Gastrocnemius medialis (tissue), 4 donors: ENCODE measurements at regions of chr16 and their contacts with region 1.

Region 1: GRCh38 chr16:67521095-67521804 is 7.4 kb upstream of the RIPOR1 start:
- DNase-seq: peak; percentile 90 to 94
- ATAC-seq: peak; percentile 95
- H3K4me3 ChIP-seq: peak overlapping the region; percentile 42 to 62 (median 56)
- H3K27ac ChIP-seq: peak overlapping the region; percentile 87 to 93 (median 88)
- H3K4me1 ChIP-seq: peaks cover 3 to 4% of the 10 kb centered on the region in 2 donors
- H3K27me3 ChIP-seq: no peaks in the 10 kb centered on the region
- CTCF ChIP-seq: peak; percentile 78 to 93 (median 89)
- POLR2A ChIP-seq: peak in 1 of 2 donors; percentile 14

Region 2: GRCh38 chr16:67372664-67373063 is 148.6 kb before region 1 on chr16:
- in situ Hi-C with region 1: no loop called
- intact Hi-C with region 1: no loop called
- DNase-seq: no peak
- ATAC-seq: no peak
- H3K4me3 ChIP-seq: no peak overlapping the region
- H3K27ac ChIP-seq: no peak overlapping the region
- H3K4me1 ChIP-seq: peaks cover 0 to 3% of the 10 kb centered on the region in 2 donors
- H3K27me3 ChIP-seq: no peaks in the 10 kb centered on the region
- CTCF ChIP-seq: peak in 4 of 5 experiments; percentile 22 to 53 (median 34)
- POLR2A ChIP-seq: no peak

Region 3: GRCh38 chr16:67406111-67406890 is 114.9 kb before region 1 on chr16:
- in situ Hi-C with region 1: no loop called
- intact Hi-C with region 1: no loop called
- DNase-seq: peak in 1 of 2 donors; percentile 63
- ATAC-seq: peak; percentile 92 to 97
- H3K4me3 ChIP-seq: no peak overlapping the region
- H3K27ac ChIP-seq: peak overlapping the region; percentile 71 to 85 (median 82)
- H3K4me1 ChIP-seq: peaks cover 33 to 48% of the 10 kb centered on the region in 2 donors
- H3K27me3 ChIP-seq: no peaks in the 10 kb centered on the region
- CTCF ChIP-seq: no peak
- POLR2A ChIP-seq: no peak

Region 4: DNA sequence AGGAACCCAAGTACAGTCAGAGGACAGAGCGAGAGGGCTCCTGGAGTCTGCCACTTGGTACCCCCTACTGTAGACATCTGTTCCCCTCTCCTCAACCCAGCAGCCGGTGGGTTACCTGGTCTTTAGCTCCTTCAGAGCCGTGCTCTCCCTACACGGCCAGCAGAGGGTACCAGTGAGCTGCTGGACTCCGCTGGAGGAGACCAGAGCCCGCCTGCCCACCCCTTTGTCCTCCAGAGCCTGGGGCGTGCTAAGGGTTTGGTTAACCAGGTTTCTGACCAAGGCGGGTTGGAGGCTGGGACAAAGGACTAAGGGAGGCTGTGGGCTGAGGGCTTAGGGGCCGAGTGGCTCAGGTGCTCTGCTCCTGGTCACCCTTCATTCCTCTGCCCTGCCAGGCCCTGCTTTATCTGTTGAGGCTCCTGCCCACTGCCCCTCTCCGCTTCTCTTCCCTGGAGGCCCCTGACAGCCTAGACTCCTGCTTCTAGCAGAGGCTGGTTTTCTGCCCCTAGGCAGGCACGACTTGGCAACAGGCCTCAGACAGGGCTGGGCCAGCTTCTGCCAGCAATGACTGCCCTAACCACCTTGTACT is 93.0 kb before region 1 on chr16:
- in situ Hi-C with region 1: no loop called
- intact Hi-C with region 1: loop called (anchors 5 kb)
- DNase-seq: peak in 1 of 2 donors; percentile 64
- ATAC-seq: peak; percentile 61 to 66
- H3K4me3 ChIP-seq: no peak overlapping the region
- H3K27ac ChIP-seq: no peak overlapping the region
- H3K4me1 ChIP-seq: peaks cover 11 to 16% of the 10 kb centered on the region in 2 donors
- H3K27me3 ChIP-seq: peaks cover 0 to 6% (median 0%) of the 10 kb centered on the region in 3 donors
- CTCF ChIP-seq: peak; percentile 85 to 90 (median 87)
- POLR2A ChIP-seq: no peak

Region 5: DNA sequence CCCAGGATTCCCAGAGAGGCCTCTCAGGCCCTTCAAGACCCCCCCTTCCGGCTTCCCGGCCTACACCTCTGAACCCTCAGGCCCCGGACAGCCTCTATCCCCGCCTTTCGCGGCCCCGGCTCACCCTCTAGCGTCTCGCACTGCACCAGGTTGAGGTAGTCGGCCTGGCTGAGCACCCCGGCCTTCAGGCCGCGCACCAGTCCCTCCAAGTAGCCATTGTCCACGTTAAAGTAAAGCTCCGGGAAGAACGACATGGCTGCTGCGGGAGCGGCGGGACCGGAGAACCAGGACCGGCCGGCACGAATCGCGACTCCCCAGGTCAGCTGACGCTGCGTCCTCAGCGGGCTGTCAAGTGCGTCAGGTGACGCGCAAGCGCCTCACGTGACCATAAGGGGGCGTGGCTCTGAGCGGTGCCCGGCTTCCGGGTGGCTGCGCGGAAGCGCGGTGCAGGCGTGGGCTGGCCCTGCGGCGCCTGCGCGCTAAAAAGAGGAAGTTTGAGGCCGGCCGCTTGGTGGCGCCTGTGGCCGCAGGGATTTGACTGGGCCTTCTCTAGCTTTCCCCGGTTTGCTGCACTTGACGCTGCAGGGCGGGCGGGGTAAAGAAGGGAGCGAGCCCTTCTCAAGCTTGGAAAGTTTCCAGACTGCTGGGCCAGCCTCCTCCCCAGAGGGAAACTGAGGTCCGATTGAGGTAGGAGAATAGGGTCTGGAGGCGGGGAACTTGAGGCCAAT is 40.3 kb before region 1 on chr16 and contains the start of gene ATP6V0D1:
- in situ Hi-C with region 1: loop called in 1 of 4 experiments (anchors 5 kb)
- intact Hi-C with region 1: loop called (anchors 5 kb)
- DNase-seq: peak; percentile 95 to 98
- ATAC-seq: peak; percentile 97
- H3K4me3 ChIP-seq: peak within 1 kb of the TSS; percentile 65 to 98 (median 92)
- H3K27ac ChIP-seq: peak within 1 kb of the TSS; percentile 82 to 97 (median 95)
- H3K4me1 ChIP-seq: peaks cover 28 to 40% of the 10 kb centered on the region in 2 donors
- H3K27me3 ChIP-seq: no peaks in the 10 kb centered on the region
- CTCF ChIP-seq: peak; percentile 88 to 95 (median 94)
- POLR2A ChIP-seq: peak; percentile 88 to 90
- total RNA-seq, gene ATP6V0D1: 117 to 211 (median 157) TPM

Region 6: GRCh38 chr16:67641779-67642708 is 120.8 kb after region 1 on chr16:
- in situ Hi-C with region 1: loop called in 1 of 4 experiments (anchors 25 kb)
- intact Hi-C with region 1: loop called (anchors 1 kb)
- DNase-seq: peak; percentile 64 to 86
- ATAC-seq: peak; percentile 90 to 91
- H3K4me3 ChIP-seq: no peak overlapping the region
- H3K27ac ChIP-seq: peak overlapping the region; percentile 45 to 74 (median 64)
- H3K4me1 ChIP-seq: peaks cover 21 to 37% of the 10 kb centered on the region in 2 donors
- H3K27me3 ChIP-seq: peaks cover 16 to 19% (median 18%) of the 10 kb centered on the region in 3 donors
- CTCF ChIP-seq: no peak
- POLR2A ChIP-seq: peak in 1 of 2 donors; percentile 12

Region 7: GRCh38 chr16:67660564-67661028 is 139.3 kb after region 1 on chr16 and contains the start of gene PARD6A:
- in situ Hi-C with region 1: loop called in 2 of 4 experiments (anchors 10 kb)
- intact Hi-C with region 1: no loop called
- DNase-seq: peak; percentile 88 to 90
- ATAC-seq: peak; percentile 83 to 88
- H3K4me3 ChIP-seq: peak within 1 kb of the TSS; percentile 66 to 83 (median 76)
- H3K27ac ChIP-seq: peak within 1 kb of the TSS; percentile 91 to 97 (median 94)
- H3K4me1 ChIP-seq: peaks cover 19% of the 10 kb centered on the region in 2 donors
- H3K27me3 ChIP-seq: no peaks in the 10 kb centered on the region
- CTCF ChIP-seq: peak in 3 of 5 experiments; percentile 15 to 23 (median 20)
- POLR2A ChIP-seq: peak in 1 of 2 donors; percentile 61
- total RNA-seq, gene PARD6A: 2.7 to 17.3 (median 12.5) TPM

Region 8: GRCh38 chr16:67667817-67668494 is 146.7 kb after region 1 on chr16:
- in situ Hi-C with region 1: loop called in 1 of 4 experiments (anchors 10 kb)
- intact Hi-C with region 1: loop called (anchors 1 kb)
- DNase-seq: peak; percentile 85 to 90
- ATAC-seq: peak; percentile 75 to 87
- H3K4me3 ChIP-seq: peak overlapping the region; percentile 75 to 91 (median 86)
- H3K27ac ChIP-seq: peak overlapping the region; percentile 86 to 92 (median 92)
- H3K4me1 ChIP-seq: peaks cover 19 to 28% of the 10 kb centered on the region in 2 donors
- H3K27me3 ChIP-seq: no peaks in the 10 kb centered on the region
- CTCF ChIP-seq: peak; percentile 87 to 91 (median 90)
- POLR2A ChIP-seq: no peak

Region 9: GRCh38 chr16:67806428-67807147 is 285.3 kb after region 1 on chr16 and contains the starts of genes RANBP10 and TSNAXIP1:
- in situ Hi-C with region 1: no loop called
- intact Hi-C with region 1: loop called (anchors 10 kb)
- DNase-seq: peak; percentile 98 to 99
- ATAC-seq: peak; percentile 97 to 98
- H3K4me3 ChIP-seq: peak within 1 kb of the TSS; percentile 86 to 99 (median 96)
- H3K27ac ChIP-seq: peak within 1 kb of the TSS; percentile 92 to 99 (median 97)
- H3K4me1 ChIP-seq: peaks cover 32 to 35% of the 10 kb centered on the region in 2 donors
- H3K27me3 ChIP-seq: no peaks in the 10 kb centered on the region
- CTCF ChIP-seq: no peak
- POLR2A ChIP-seq: peak; percentile 92 to 97
- total RNA-seq, gene RANBP10: 12.6 to 46.6 (median 14.8) TPM
- total RNA-seq, gene TSNAXIP1: 0.27 to 11.0 (median 0.56) TPM in 3 of 4 donors, not detected in the other